ENCODE measurements at regions of chr7 and their contacts with region 1.

Region 1: DNA sequence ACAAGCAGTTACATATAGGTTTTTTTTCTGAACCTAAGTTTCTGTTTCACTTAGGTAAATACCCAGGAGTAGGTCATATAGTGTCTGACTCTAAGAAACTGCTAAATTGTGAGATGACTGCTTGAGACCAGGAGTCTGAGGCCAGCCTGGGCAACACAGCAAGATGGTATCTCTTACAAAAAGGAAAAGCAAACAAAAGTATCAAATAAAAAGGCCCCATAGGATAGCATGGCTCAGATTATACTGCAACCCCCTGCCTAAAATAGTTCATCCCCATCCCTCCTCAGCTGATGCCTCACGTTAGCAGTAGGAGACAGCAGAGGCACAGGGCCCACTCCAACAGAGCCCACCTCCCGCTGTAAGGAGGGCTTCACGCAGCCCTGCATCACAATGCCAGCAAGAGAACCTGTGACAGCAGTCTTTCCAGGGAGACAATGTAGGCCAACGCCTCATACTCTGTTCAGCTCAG is 90.2 kb downstream of the SRPK2 start:
- DNase-seq: peak; percentile 69
- H3K4me3 Mint-ChIP-seq: peak overlapping the region; percentile 47
- H3K27ac Mint-ChIP-seq: peak overlapping the region; percentile 93
- H3K4me1 Mint-ChIP-seq: peaks cover 59% of the 10 kb centered on the region
- H3K27me3 Mint-ChIP-seq: no peaks in the 10 kb centered on the region

Region 2: GRCh38 chr7:105118612-105119600 is 179.6 kb before region 1 on chr7:
- CTCF ChIA-PET with region 1: no interaction called
- POLR2A ChIA-PET with region 1: no interaction called
- intact Hi-C with region 1: no loop called
- DNase-seq: no peak
- H3K4me3 Mint-ChIP-seq: no peak overlapping the region
- H3K27ac Mint-ChIP-seq: peak overlapping the region; percentile 11
- H3K4me1 Mint-ChIP-seq: peaks cover 27% of the 10 kb centered on the region
- H3K27me3 Mint-ChIP-seq: no peaks in the 10 kb centered on the region

Region 3: GRCh38 chr7:105209870-105210269 is 88.6 kb before region 1 on chr7:
- CTCF ChIA-PET with region 1: interaction called, 3 read pairs
- POLR2A ChIA-PET with region 1: interaction called, 5 read pairs
- intact Hi-C with region 1: loop called (anchors 1 kb)
- DNase-seq: no peak
- H3K4me3 Mint-ChIP-seq: no peak overlapping the region
- H3K27ac Mint-ChIP-seq: no peak overlapping the region
- H3K4me1 Mint-ChIP-seq: peaks cover 73% of the 10 kb centered on the region
- H3K27me3 Mint-ChIP-seq: no peaks in the 10 kb centered on the region

Region 4: GRCh38 chr7:105268511-105269392 is 29.7 kb before region 1 on chr7:
- CTCF ChIA-PET with region 1: interaction called, 5 read pairs
- POLR2A ChIA-PET with region 1: interaction called, 3 read pairs
- intact Hi-C with region 1: loop called (anchors 1 kb)
- DNase-seq: no peak
- H3K4me3 Mint-ChIP-seq: peak overlapping the region; percentile 74
- H3K27ac Mint-ChIP-seq: peak overlapping the region; percentile 79
- H3K4me1 Mint-ChIP-seq: peaks cover 52% of the 10 kb centered on the region
- H3K27me3 Mint-ChIP-seq: no peaks in the 10 kb centered on the region

Region 5: DNA sequence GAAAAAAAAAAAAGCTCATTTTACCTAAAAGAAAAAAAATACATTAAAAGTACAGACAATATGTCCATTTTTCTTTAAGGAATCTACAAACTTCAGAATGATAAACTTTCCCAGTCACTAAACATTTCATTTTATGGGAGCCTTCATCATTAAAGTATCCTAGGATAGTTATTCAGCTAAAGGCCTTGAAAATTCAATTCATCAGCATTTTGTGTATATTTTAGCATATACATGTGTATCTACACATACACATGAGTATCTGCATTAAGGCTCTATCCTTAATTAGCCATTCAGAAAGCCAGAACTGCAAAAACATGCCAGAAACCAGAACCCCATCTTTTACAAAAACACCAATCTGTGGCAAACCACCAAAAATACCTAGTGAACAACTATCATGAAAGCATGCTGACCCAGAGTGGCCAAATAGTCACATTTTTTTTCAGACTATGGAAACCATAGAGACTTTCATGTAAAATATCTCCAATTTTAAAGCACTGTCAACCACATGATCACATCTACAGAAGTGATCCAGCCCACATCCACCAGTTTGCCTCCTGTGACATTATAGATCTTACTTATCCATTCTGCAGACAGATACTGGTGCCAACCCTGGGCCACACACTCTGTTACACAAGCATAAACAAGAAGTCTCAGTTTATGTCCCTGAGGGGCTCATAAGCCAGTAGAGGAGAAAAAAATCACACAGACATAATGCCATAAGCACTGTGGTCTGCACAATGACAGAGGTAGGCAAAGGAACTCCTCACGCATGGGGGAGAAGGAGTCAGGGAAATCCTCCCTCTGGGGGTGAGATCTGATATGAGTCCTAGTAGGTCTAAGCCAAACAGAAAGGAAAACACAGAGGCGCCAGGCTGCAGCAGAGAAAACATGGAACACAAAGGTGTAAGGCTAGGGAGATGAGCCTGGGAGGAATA is 11.0 kb after region 1 on chr7:
- CTCF ChIA-PET with region 1: interaction called, 15 read pairs
- POLR2A ChIA-PET with region 1: interaction called, 17 read pairs
- intact Hi-C with region 1: loop called (anchors 1 kb)
- DNase-seq: peak; percentile 31
- H3K4me3 Mint-ChIP-seq: no peak overlapping the region
- H3K27ac Mint-ChIP-seq: peak overlapping the region; percentile 4
- H3K4me1 Mint-ChIP-seq: peaks cover 64% of the 10 kb centered on the region
- H3K27me3 Mint-ChIP-seq: no peaks in the 10 kb centered on the region

Region 6: GRCh38 chr7:105346593-105347322 is 48.3 kb after region 1 on chr7:
- CTCF ChIA-PET with region 1: no interaction called
- POLR2A ChIA-PET with region 1: interaction called, 6 read pairs
- intact Hi-C with region 1: loop called (anchors 1 kb)
- DNase-seq: peak; percentile 28
- H3K4me3 Mint-ChIP-seq: no peak overlapping the region
- H3K27ac Mint-ChIP-seq: no peak overlapping the region
- H3K4me1 Mint-ChIP-seq: peaks cover 51% of the 10 kb centered on the region
- H3K27me3 Mint-ChIP-seq: no peaks in the 10 kb centered on the region

Region 7: DNA sequence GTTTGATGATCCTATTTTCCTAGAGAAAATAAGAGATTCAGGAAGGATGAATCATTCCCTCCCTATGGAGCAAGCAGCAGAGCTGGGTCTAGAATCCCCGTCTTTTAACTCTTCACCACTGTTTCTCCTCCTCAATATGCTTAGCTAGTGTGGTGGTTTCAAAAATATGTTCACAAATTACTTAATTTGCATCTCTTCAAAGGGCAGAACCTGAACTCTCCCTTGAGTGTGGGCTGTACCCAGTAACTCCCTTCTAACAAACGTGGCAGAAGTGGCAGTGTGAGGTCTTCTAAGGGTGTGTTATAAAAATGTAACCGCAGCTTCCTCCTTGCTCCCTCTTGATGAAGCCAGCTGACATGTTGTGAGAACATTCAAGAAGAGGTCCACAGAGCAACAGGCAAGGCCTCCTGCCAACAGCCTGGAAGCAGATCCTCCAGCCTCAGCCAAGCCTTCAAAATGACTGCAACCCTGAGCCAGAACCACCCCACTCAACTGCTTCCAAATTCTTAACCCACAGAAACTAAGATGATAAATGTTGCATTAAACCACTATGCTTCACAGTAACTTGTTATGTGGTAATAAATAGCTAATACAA is 53.6 kb after region 1 on chr7:
- CTCF ChIA-PET with region 1: interaction called, 3 read pairs
- POLR2A ChIA-PET with region 1: no interaction called
- intact Hi-C with region 1: loop called (anchors 2 kb)
- DNase-seq: peak; percentile 68
- H3K4me3 Mint-ChIP-seq: peak overlapping the region; percentile 42
- H3K27ac Mint-ChIP-seq: peak overlapping the region; percentile 94
- H3K4me1 Mint-ChIP-seq: peaks cover 58% of the 10 kb centered on the region
- H3K27me3 Mint-ChIP-seq: no peaks in the 10 kb centered on the region

Region 8: DNA sequence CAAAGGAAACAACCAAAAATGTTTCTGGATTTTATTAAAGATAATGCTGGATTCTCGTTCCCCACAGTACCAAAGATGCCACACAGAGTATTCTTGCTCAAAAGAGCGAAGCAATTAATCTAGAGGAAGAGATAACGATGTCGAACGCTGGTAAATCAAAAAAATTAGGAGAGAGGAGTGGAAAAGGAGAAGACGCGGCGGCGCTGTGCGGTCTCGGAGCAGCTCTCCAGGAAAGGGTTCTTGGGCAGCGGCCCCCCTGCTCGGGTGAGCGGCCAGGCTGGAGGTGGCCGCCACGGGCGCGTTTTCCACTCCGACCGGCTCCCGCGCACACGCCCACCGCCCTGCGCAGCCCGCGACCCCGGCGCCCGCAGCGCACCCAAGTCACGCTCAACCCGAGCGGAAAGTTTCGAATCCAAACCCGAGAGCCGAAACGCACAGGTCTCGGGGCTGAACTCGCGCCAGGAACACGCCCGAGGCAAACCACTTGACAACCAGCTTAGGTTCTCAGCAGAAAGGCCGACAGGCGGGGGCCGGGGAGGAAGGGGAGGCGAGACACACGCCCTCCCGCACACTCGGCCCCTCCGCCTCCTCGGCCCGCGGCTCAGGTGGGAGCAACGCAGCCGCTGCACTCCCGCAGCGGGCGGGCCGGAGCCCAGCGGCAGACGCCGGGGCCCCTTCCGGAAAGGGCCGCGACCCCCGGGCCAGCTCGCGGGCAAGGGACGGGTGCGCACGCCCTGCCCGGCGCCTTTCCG is 89.3 kb after region 1 on chr7:
- CTCF ChIA-PET with region 1: no interaction called
- POLR2A ChIA-PET with region 1: no interaction called
- intact Hi-C with region 1: loop called (anchors 5 kb)
- DNase-seq: peak; percentile 61
- H3K4me3 Mint-ChIP-seq: peak overlapping the region; percentile 81
- H3K27ac Mint-ChIP-seq: peak overlapping the region; percentile 59
- H3K4me1 Mint-ChIP-seq: peaks cover 32% of the 10 kb centered on the region
- H3K27me3 Mint-ChIP-seq: no peaks in the 10 kb centered on the region